GM12878 (cell line): ENCODE measurements at regions of chr5 and their contacts with region 1.

Region 1: GRCh38 chr5:134527146-134527960 is 1.9 kb downstream of the JADE2 start:
- DNase-seq: no peak
- ATAC-seq: peak; percentile 68
- H3K4me3 ChIP-seq: peak overlapping the region; percentile 91
- H3K27ac ChIP-seq: peak overlapping the region; percentile 68
- H3K4me1 ChIP-seq: peaks cover 7% of the 10 kb centered on the region
- H3K27me3 ChIP-seq: no peaks in the 10 kb centered on the region
- CTCF ChIP-seq: peak; percentile 79 to 87 (median 81)
- EP300 ChIP-seq: no peak
- POLR2A ChIP-seq: peak; percentile 25; the same call in 1 of the 2 replicates
- RAD21 ChIP-seq: peak; percentile 56

Region 2: GRCh38 chr5:134328619-134329018 is 198.7 kb before region 1 on chr5:
- CTCF ChIA-PET with region 1: no interaction called
- POLR2A ChIA-PET with region 1: no interaction called
- RAD21 ChIA-PET with region 1: no interaction called
- SMC1A ChIA-PET with region 1: no interaction called
- in situ Hi-C with region 1: no loop called
- intact Hi-C with region 1: no loop called
- DNase-seq: no peak
- ATAC-seq: no peak
- H3K4me3 ChIP-seq: no peak overlapping the region
- H3K27ac ChIP-seq: no peak overlapping the region
- H3K4me1 ChIP-seq: no peaks in the 10 kb centered on the region
- H3K27me3 ChIP-seq: no peaks in the 10 kb centered on the region; a peak in 1 of 4 replicates
- CTCF ChIP-seq: no peak
- EP300 ChIP-seq: no peak
- POLR2A ChIP-seq: no peak
- RAD21 ChIP-seq: no peak

Region 3: GRCh38 chr5:134370871-134371833 is 156.2 kb before region 1 on chr5 and contains the start of gene UBE2B:
- CTCF ChIA-PET with region 1: interaction called, 6 read pairs
- POLR2A ChIA-PET with region 1: interaction called, 13 read pairs
- RAD21 ChIA-PET with region 1: interaction called, 7 read pairs
- SMC1A ChIA-PET with region 1: interaction called, 6 read pairs
- in situ Hi-C with region 1: no loop called
- intact Hi-C with region 1: no loop called
- DNase-seq: peak; percentile 97
- ATAC-seq: peak; percentile 75
- H3K4me3 ChIP-seq: peak within 1 kb of the TSS; percentile 99
- H3K27ac ChIP-seq: peak within 1 kb of the TSS; percentile 89
- H3K4me1 ChIP-seq: peaks cover 2% of the 10 kb centered on the region; the same call in 1 of the 2 replicates
- H3K27me3 ChIP-seq: no peaks in the 10 kb centered on the region
- CTCF ChIP-seq: no peak
- EP300 ChIP-seq: peak in 1 of 2 experiments; percentile 73
- POLR2A ChIP-seq: peak; percentile 76
- RAD21 ChIP-seq: no peak
- polyA plus RNA-seq, gene UBE2B: 126 to 154 TPM

Region 4: GRCh38 chr5:134446938-134447337 is 80.4 kb before region 1 on chr5:
- CTCF ChIA-PET with region 1: interaction called, 5 read pairs
- POLR2A ChIA-PET with region 1: no interaction called
- RAD21 ChIA-PET with region 1: interaction called, 11 read pairs
- SMC1A ChIA-PET with region 1: interaction called, 3 read pairs
- in situ Hi-C with region 1: no loop called
- intact Hi-C with region 1: no loop called
- DNase-seq: no peak
- ATAC-seq: peak; percentile 95
- H3K4me3 ChIP-seq: no peak overlapping the region
- H3K27ac ChIP-seq: no peak overlapping the region
- H3K4me1 ChIP-seq: peaks cover 4% of the 10 kb centered on the region; the same call in 1 of the 2 replicates
- H3K27me3 ChIP-seq: no peaks in the 10 kb centered on the region
- CTCF ChIP-seq: no peak; a peak in 1 of 6 replicates
- EP300 ChIP-seq: no peak
- POLR2A ChIP-seq: no peak
- RAD21 ChIP-seq: no peak

Region 5: DNA sequence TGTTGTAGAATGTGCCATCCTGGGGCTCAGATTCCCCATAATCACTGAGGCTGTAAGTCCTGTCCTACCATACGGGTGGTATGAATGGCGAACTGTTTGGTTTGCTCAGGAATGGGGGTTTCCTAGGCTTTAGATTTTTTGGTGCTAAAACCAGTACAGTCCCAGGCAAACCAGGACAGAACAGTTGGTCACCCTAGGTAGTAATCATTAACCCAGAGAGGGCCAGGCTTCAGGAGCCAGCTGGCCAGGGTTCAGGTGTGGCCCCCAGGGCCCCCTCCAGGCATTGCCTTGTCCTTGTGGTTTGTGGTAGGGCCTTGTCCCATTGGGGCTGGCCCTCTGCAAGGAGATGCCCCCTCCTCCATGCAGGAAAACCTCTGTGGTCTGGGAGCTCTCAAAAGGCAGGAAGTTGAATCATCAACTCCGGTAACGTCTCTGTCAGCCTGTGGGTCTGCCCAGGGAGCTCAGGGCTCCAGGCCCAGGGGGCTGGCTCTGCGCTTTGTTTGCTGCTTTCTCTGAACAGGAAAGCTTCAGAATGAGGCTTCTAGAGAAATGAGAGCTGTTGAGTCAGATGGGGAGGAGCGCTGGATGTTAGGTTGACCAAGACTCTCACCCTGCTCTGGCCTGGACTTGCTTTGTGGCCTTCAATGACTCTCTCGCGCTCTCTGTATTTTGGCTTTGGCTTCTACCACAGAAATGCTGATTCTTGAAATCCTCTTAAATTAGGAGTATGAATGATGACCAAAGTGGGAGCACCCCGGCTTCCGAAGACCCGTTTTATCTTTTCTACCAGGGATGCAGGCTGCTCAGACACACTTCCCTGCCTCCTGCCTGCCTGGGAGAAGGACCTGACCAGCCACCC is 24.0 kb before region 1 on chr5:
- CTCF ChIA-PET with region 1: interaction called, 3 read pairs
- POLR2A ChIA-PET with region 1: interaction called, 8 read pairs
- RAD21 ChIA-PET with region 1: interaction called, 4 read pairs
- SMC1A ChIA-PET with region 1: interaction called, 6 read pairs
- in situ Hi-C with region 1: no loop called
- intact Hi-C with region 1: loop called (anchors 2 kb)
- DNase-seq: peak; percentile 53
- ATAC-seq: peak; percentile 93
- H3K4me3 ChIP-seq: no peak overlapping the region
- H3K27ac ChIP-seq: peak overlapping the region; percentile 67
- H3K4me1 ChIP-seq: peaks cover 15% of the 10 kb centered on the region
- H3K27me3 ChIP-seq: no peaks in the 10 kb centered on the region
- CTCF ChIP-seq: no peak
- EP300 ChIP-seq: no peak
- POLR2A ChIP-seq: peak; percentile 59
- RAD21 ChIP-seq: 0 out of 2 replicates have a peak, but pooled peaks have one; percentile 11

Region 6: GRCh38 chr5:134547579-134547978 is 20.2 kb after region 1 on chr5:
- CTCF ChIA-PET with region 1: interaction called, 145 read pairs
- POLR2A ChIA-PET with region 1: interaction called, 60 read pairs
- RAD21 ChIA-PET with region 1: interaction called, 144 read pairs
- SMC1A ChIA-PET with region 1: interaction called, 148 read pairs
- in situ Hi-C with region 1: no loop called
- intact Hi-C with region 1: loop called (anchors 2 kb)
- DNase-seq: no peak
- ATAC-seq: no peak
- H3K4me3 ChIP-seq: 0 out of 2 replicates have a peak overlapping the region, but pooled peaks have one; percentile 8
- H3K27ac ChIP-seq: peak overlapping the region; percentile 35
- H3K4me1 ChIP-seq: peaks cover 65% of the 10 kb centered on the region
- H3K27me3 ChIP-seq: no peaks in the 10 kb centered on the region
- CTCF ChIP-seq: no peak
- EP300 ChIP-seq: no peak
- POLR2A ChIP-seq: no peak
- RAD21 ChIP-seq: no peak

Region 7: GRCh38 chr5:134577796-134578363 is 50.5 kb after region 1 on chr5:
- CTCF ChIA-PET with region 1: interaction called, 19 read pairs
- POLR2A ChIA-PET with region 1: interaction called, 6 read pairs
- RAD21 ChIA-PET with region 1: interaction called, 16 read pairs
- SMC1A ChIA-PET with region 1: interaction called, 7 read pairs
- in situ Hi-C with region 1: no loop called
- intact Hi-C with region 1: loop called (anchors 2 kb)
- DNase-seq: no peak
- ATAC-seq: peak; percentile 92
- H3K4me3 ChIP-seq: no peak overlapping the region
- H3K27ac ChIP-seq: no peak overlapping the region
- H3K4me1 ChIP-seq: no peaks in the 10 kb centered on the region
- H3K27me3 ChIP-seq: no peaks in the 10 kb centered on the region
- CTCF ChIP-seq: peak; percentile 79 to 91 (median 87)
- EP300 ChIP-seq: no peak
- POLR2A ChIP-seq: no peak
- RAD21 ChIP-seq: peak; percentile 92

Region 8: DNA sequence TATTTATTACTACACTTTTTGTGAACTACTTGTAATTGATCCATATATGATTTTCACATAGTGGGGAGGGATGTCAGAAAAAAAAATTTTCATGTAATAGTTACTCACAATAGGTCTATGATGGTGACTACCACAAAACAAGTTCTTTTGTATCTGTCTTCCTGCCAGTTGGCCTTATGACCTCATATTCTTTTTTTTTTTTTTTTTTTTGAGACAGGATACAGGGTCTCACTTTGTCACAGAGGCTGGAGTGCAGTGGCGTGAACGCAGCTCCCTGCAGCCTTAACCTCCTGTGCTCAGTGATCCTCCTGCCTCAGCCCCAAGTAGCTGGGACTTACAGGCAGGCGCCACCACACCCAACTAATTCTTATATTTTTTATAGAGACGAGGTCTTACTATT is 132.1 kb after region 1 on chr5:
- CTCF ChIA-PET with region 1: no interaction called
- POLR2A ChIA-PET with region 1: no interaction called
- RAD21 ChIA-PET with region 1: no interaction called
- SMC1A ChIA-PET with region 1: no interaction called
- in situ Hi-C with region 1: no loop called
- intact Hi-C with region 1: no loop called
- DNase-seq: no peak
- ATAC-seq: no peak
- H3K4me3 ChIP-seq: no peak overlapping the region
- H3K27ac ChIP-seq: no peak overlapping the region
- H3K4me1 ChIP-seq: no peaks in the 10 kb centered on the region
- H3K27me3 ChIP-seq: no peaks in the 10 kb centered on the region
- CTCF ChIP-seq: no peak
- EP300 ChIP-seq: no peak
- POLR2A ChIP-seq: no peak
- RAD21 ChIP-seq: no peak

Region 9: GRCh38 chr5:134845852-134846640 is 318.7 kb after region 1 on chr5 and contains the start of gene C5orf24:
- CTCF ChIA-PET with region 1: no interaction called
- POLR2A ChIA-PET with region 1: no interaction called
- RAD21 ChIA-PET with region 1: no interaction called
- SMC1A ChIA-PET with region 1: no interaction called
- in situ Hi-C with region 1: no loop called
- intact Hi-C with region 1: no loop called
- DNase-seq: peak; percentile 90
- ATAC-seq: peak; percentile 95
- H3K4me3 ChIP-seq: peak within 1 kb of the TSS; percentile 84
- H3K27ac ChIP-seq: peak within 1 kb of the TSS; percentile 92
- H3K4me1 ChIP-seq: peaks cover 10% of the 10 kb centered on the region
- H3K27me3 ChIP-seq: no peaks in the 10 kb centered on the region
- CTCF ChIP-seq: no peak
- EP300 ChIP-seq: no peak
- POLR2A ChIP-seq: peak; percentile 98
- RAD21 ChIP-seq: no peak
- polyA plus RNA-seq, gene C5orf24: 5.4 to 5.6 TPM